Psoas muscle (tissue), 8 donors: ENCODE measurements at regions of chr12 and their contacts with region 1.

Region 1: DNA sequence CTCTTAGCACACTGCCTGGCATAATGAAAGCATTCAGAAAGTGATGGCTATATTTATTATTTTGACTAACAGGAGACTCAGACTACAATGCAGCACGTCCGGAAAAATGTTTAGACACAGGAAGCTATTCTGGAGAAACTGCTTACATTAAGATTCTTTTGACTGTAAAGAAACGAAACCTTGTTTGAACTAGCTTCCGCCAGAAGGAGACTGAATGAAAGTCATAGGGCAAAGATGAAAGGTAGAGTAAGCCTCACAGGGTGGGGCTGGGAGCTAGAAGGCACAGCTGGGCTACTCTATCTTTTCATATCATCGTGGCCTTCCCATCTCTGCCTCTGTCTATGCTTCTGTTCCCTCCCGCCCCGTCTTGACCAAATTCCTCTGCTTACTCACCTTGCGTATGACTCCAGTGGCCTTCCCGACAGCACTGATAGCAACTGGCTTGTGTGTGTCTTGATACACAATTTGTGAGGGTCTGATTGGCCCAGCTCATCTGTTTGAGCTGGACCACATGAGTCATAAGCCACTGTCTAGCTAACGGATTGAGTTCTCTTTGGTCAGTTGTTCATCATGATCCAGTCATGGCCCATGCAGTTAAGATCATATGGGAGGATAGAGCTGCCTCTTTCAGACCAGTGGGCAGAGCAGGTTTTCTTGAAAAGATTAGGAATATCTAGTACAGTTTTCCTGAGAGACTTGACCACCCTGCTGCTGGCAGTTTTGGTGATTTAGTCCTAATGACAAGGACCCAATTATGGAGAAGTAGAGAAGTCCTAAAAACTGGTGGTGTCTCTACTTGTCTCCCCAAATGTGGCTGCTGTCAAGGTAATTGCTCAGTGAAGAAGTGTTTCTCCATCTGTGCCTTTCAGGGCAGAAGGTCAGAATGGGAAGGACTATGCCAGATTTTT is 151.5 kb upstream of the SLC38A2 start:
- DNase-seq: peak in 1 of 2 donors; percentile 23
- ATAC-seq: peak in 2 of 4 donors; percentile 54 to 59
- H3K4me3 ChIP-seq: no peak overlapping the region
- H3K27ac ChIP-seq: peak overlapping the region; percentile 17
- H3K4me1 ChIP-seq: peaks cover 5% of the 10 kb centered on the region
- H3K27me3 ChIP-seq: no peaks in the 10 kb centered on the region
- CTCF ChIP-seq: no peak

Region 2: DNA sequence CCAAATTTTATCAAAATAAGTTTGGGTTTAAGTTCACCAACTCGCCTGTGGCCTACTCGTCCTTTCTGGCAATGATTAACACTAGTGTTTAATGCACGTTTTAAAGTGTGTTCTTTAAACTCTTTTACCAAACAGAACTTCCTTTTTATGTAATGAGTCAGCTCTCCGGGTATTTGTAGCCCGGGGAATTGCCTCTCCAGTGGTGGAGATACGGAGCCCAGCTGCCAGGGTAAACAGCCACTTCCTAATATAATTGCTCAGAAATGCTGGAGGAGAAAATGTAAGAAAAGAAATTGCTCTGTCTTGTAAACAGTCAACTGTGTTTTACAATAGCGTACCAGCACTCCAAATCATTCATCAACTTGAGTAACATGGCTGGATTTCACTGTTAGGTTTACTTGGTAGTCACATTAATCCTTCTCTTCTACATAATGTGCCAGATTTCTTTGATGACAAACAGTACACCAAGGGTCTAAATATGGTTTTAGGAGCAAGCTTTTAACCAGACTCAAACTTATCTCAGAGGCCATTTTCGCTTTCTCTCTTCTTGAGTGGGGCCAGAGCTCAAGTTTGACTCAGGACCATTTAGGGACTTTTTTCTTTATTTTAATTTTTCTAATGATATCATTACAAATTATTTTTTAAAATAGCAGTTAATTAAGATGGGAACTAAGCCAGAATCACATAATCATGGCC is 50.3 kb before region 1 on chr12:
- intact Hi-C with region 1: loop called in 1 of 2 experiments (anchors 2 kb)
- DNase-seq: peak; percentile 45 to 58
- ATAC-seq: peak; percentile 68 to 79 (median 69)
- H3K4me3 ChIP-seq: peak overlapping the region; percentile 28
- H3K27ac ChIP-seq: peak overlapping the region; percentile 91
- H3K4me1 ChIP-seq: peaks cover 37% of the 10 kb centered on the region
- H3K27me3 ChIP-seq: no peaks in the 10 kb centered on the region
- CTCF ChIP-seq: no peak

Region 3: GRCh38 chr12:46487567-46488131 is 36.5 kb before region 1 on chr12:
- intact Hi-C with region 1: loop called in 1 of 2 experiments (anchors 5 kb)
- DNase-seq: no peak
- ATAC-seq: no peak
- H3K4me3 ChIP-seq: no peak overlapping the region
- H3K27ac ChIP-seq: no peak overlapping the region
- H3K4me1 ChIP-seq: peaks cover 19% of the 10 kb centered on the region
- H3K27me3 ChIP-seq: no peaks in the 10 kb centered on the region
- CTCF ChIP-seq: no peak

Region 4: DNA sequence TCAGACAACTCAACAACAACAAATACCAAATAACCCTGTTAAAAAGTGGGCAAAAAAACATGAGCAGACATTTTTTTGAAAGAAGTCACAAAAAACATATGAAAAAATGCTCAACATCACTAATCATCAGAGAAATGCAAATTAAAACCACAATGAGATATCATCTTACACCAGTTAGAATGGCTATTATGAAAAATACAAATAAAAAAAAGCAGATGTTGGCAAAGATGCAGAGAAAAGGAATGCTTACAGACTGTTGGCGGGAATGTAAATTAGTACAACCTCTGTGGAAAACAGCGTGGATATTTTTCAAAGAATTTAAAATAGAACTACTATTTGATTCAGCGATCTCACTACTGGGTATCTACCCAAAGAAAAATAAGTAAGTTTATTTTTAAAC is 187.6 kb after region 1 on chr12:
- intact Hi-C with region 1: no loop called
- DNase-seq: no peak
- ATAC-seq: no peak
- H3K4me3 ChIP-seq: no peak overlapping the region
- H3K27ac ChIP-seq: no peak overlapping the region
- H3K4me1 ChIP-seq: no peaks in the 10 kb centered on the region
- H3K27me3 ChIP-seq: peaks cover 0 to 2% (median 0%) of the 10 kb centered on the region in 3 donors
- CTCF ChIP-seq: no peak